Activated T-helper 2 cell treated with anti-CD3 and anti-CD28 coated beads, Interferon-gamma antibody, Interleukin-2, Interleukin-4, amounts not matched to agents 10 μg/mL and 5 μg/mL and 100 μg/mL, durations not matched to agents 14 hours and 24 hours and 36 hours (primary cell): ENCODE measurements at regions of chr10 and their contacts with region 1.

Region 1: GRCh38 chr10:21584834-21585530 is 51.0 kb downstream of the MLLT10 start:
- DNase-seq: no peak
- H3K4me3 Mint-ChIP-seq: no peak overlapping the region
- H3K27ac Mint-ChIP-seq: peak overlapping the region; percentile 64
- H3K4me1 Mint-ChIP-seq: peaks cover 44% of the 10 kb centered on the region
- H3K27me3 Mint-ChIP-seq: no peaks in the 10 kb centered on the region

Region 2: GRCh38 chr10:21614000-21614399 is 29.0 kb after region 1 on chr10:
- intact Hi-C with region 1: loop called (anchors 2 kb)
- DNase-seq: no peak
- H3K4me3 Mint-ChIP-seq: no peak overlapping the region
- H3K27ac Mint-ChIP-seq: no peak overlapping the region
- H3K4me1 Mint-ChIP-seq: peaks cover 11% of the 10 kb centered on the region
- H3K27me3 Mint-ChIP-seq: no peaks in the 10 kb centered on the region

Region 3: DNA sequence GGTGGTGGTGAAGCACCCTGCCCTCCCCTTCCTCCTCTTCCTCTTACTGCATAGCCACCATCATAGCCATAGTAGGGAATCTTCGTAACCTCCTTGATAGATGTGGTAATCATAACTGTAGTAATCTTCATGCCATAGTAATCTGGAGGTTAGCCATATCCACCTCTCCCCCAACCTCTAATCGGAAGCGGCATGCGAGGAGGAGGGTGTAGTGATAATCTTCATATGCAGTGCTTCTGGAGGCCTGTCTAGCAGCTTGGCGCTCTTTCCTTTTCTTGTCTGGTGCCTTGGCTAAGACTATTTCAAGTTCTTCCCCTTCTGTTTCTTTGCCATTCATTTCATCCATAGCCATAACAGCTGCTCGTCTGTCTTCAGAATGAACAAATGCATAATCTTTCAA is 40.0 kb after region 1 on chr10:
- intact Hi-C with region 1: no loop called
- DNase-seq: no peak
- H3K4me3 Mint-ChIP-seq: no peak overlapping the region
- H3K27ac Mint-ChIP-seq: no peak overlapping the region
- H3K4me1 Mint-ChIP-seq: peaks cover 26% of the 10 kb centered on the region
- H3K27me3 Mint-ChIP-seq: no peaks in the 10 kb centered on the region